B cell (primary cell): ENCODE measurements at regions of chr1 and their contacts with region 1.

Region 1: DNA sequence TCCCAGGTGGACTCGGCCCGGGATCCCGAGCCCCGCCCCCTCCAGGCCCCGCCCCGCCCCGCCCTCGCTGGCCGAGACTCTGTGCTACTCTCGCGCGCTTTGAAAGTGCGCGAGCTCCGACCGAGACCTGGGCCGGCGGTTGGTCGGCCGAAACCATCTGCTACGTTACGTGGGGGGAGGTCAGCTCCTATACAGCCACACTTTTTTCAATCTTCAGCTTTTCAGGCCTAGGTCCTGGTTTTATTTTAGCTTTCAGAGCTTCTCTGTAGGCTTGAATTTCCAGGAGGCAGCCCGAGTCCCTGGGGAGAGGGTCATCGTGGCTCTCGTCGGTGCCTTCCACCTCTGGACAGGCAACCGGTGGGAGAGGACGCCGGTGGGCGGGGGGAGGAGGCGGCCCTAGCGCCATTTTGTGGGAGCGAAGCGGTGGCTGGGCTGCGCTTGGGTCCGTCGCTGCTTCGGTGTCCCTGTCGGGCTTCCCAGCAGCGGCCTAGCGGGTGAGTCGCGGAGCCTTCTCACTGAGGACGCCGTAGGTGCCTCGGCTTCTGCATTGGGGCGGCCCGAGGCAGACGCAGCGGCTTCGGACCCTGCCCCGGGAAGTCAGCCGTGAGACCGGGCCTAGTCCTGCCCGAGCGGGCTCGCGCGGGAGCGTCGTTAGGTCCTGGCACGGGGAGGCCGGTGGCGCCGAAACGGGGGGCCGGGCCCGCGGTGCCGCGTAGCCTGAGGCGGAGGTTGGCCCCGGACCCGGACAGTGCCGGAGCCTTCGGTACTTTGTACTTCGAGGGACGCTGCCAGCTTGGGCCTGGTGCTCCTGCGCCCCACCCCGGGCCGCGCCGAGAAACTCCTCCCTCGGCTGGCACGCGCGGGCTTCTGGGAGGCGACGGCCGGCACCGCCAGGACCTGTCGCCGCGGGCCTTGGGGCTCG is at the start of gene TARDBP:
- DNase-seq: peak; percentile 98
- ATAC-seq: peak; percentile 88
- H3K4me3 ChIP-seq: peak within 1 kb of the TSS; percentile 81 to 97 (median 95)
- H3K4me3 Mint-ChIP-seq: peak within 1 kb of the TSS; percentile 86
- H3K27ac ChIP-seq: peak within 1 kb of the TSS; percentile 98 to 99
- H3K27ac Mint-ChIP-seq: peak within 1 kb of the TSS; percentile 99
- H3K4me1 ChIP-seq: peaks cover 15 to 26% of the 10 kb centered on the region in 2 donors
- H3K4me1 Mint-ChIP-seq: peaks cover 29% of the 10 kb centered on the region
- H3K27me3 ChIP-seq: no peaks in the 10 kb centered on the region
- H3K27me3 Mint-ChIP-seq: no peaks in the 10 kb centered on the region
- CTCF ChIP-seq: no peak
- total RNA-seq, gene TARDBP: 222 and 226 TPM in 2 replicates

Region 2: DNA sequence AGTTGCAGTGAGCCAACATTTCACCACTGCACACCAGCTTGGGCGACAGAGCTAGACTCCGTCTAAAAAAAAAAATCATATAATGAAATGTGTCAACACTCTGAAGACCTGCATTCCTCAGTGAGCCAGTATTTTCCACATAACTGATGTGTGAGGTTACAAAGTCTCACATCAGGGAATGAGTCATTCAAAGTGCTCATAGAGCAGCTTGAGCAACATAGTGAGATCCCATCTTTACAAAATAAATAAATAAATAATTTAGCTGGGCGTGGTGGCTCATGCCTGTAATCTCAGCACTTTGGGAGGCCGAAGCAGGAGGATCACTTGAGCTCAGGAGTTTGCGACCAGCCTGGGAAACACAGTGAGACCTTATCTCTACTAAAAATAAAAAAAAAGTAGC is 281.5 kb before region 1 on chr1:
- CTCF ChIA-PET with region 1: no interaction called
- POLR2A ChIA-PET with region 1: no interaction called
- intact Hi-C with region 1: no loop called
- DNase-seq: no peak
- ATAC-seq: no peak
- H3K4me3 ChIP-seq: no peak overlapping the region
- H3K4me3 Mint-ChIP-seq: no peak overlapping the region
- H3K27ac ChIP-seq: no peak overlapping the region
- H3K27ac Mint-ChIP-seq: no peak overlapping the region
- H3K4me1 ChIP-seq: no peaks in the 10 kb centered on the region
- H3K4me1 Mint-ChIP-seq: no peaks in the 10 kb centered on the region
- H3K27me3 ChIP-seq: no peaks in the 10 kb centered on the region
- H3K27me3 Mint-ChIP-seq: peaks cover 3% of the 10 kb centered on the region
- CTCF ChIP-seq: no peak

Region 3: GRCh38 chr1:11099310-11100149 is 87.0 kb after region 1 on chr1 and contains the start of gene EXOSC10:
- CTCF ChIA-PET with region 1: interaction called, 3 read pairs
- POLR2A ChIA-PET with region 1: interaction called, 9 read pairs
- intact Hi-C with region 1: loop called (anchors 1 kb)
- DNase-seq: peak; percentile 94
- ATAC-seq: peak; percentile 98
- H3K4me3 ChIP-seq: peak within 1 kb of the TSS; percentile 56 to 96 (median 83)
- H3K4me3 Mint-ChIP-seq: peak within 1 kb of the TSS; percentile 96
- H3K27ac ChIP-seq: peak within 1 kb of the TSS; percentile 48 to 90
- H3K27ac Mint-ChIP-seq: peak within 1 kb of the TSS; percentile 98
- H3K4me1 ChIP-seq: peaks cover 11 to 15% of the 10 kb centered on the region in 2 donors
- H3K4me1 Mint-ChIP-seq: peaks cover 18% of the 10 kb centered on the region
- H3K27me3 ChIP-seq: no peaks in the 10 kb centered on the region
- H3K27me3 Mint-ChIP-seq: no peaks in the 10 kb centered on the region
- CTCF ChIP-seq: no peak
- total RNA-seq, gene EXOSC10: 118 and 119 TPM in 2 replicates